ENCODE measurements at regions of chr17 and their contacts with region 1.

Region 1: DNA sequence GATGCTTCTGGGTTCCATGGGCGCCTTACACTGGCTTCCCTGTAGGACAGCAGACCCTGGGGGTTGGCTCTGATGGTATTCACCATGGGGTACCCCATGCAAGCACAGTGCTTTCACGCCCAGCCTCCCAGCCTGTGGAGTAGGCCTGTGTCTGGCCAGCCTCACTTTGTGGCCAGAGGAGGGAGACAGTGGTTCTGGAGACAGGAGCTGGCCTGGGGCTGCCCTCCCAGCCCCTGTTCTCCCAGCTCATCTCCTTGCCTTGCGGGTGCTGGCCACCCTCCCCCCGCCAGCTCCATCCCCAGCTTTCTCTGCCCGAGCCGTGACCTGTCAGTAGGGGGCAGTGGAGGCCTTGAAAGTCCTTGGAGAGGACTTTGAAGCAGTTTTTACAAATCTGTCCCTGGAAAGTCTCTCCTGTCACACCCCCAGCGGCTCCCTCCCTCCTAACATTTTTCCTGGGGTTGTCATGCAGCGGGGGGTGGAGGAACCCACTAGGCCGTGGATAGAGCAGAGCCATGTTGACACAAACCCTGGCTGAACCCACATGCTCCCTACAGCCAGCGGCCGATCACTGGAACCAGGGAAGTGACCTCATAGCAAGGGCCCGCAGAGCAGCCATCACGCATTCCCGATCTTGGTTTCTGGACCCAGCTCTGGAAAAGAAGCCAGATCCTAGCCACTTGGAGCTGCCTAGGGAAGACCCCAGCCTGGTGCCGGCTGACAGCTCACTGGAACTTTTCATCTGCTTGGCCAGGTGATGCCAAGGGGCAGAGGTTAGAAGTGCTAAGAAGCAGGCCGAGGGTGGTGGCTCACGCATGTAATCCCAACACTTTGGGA is 289.4 kb downstream of the SEC14L1 start:
- DNase-seq: peak; percentile 80 to 86 (median 81)
- ATAC-seq: peak; percentile 77
- H3K4me3 ChIP-seq: no peak overlapping the region
- H3K27ac ChIP-seq: peak overlapping the region; percentile 33 to 85 (median 77)
- H3K4me1 ChIP-seq: peaks cover 63% of the 10 kb centered on the region
- H3K27me3 ChIP-seq: no peaks in the 10 kb centered on the region
- CTCF ChIP-seq: peak; percentile 16 to 72 (median 63)
- POLR2A ChIP-seq: no peak

Region 2: GRCh38 chr17:77479372-77480198 is 49.4 kb after region 1 on chr17:
- intact Hi-C with region 1: loop called (anchors 5 kb)
- DNase-seq: no peak
- ATAC-seq: no peak
- H3K4me3 ChIP-seq: no peak overlapping the region
- H3K27ac ChIP-seq: no peak overlapping the region
- H3K4me1 ChIP-seq: peaks cover 17% of the 10 kb centered on the region
- H3K27me3 ChIP-seq: no peaks in the 10 kb centered on the region
- CTCF ChIP-seq: no peak
- POLR2A ChIP-seq: no peak

Measured in body of pancreas (tissue), 4 donors.